Vagina (tissue), 2 donors: ENCODE measurements at regions of chr11 and their contacts with region 1.

Region 1: DNA sequence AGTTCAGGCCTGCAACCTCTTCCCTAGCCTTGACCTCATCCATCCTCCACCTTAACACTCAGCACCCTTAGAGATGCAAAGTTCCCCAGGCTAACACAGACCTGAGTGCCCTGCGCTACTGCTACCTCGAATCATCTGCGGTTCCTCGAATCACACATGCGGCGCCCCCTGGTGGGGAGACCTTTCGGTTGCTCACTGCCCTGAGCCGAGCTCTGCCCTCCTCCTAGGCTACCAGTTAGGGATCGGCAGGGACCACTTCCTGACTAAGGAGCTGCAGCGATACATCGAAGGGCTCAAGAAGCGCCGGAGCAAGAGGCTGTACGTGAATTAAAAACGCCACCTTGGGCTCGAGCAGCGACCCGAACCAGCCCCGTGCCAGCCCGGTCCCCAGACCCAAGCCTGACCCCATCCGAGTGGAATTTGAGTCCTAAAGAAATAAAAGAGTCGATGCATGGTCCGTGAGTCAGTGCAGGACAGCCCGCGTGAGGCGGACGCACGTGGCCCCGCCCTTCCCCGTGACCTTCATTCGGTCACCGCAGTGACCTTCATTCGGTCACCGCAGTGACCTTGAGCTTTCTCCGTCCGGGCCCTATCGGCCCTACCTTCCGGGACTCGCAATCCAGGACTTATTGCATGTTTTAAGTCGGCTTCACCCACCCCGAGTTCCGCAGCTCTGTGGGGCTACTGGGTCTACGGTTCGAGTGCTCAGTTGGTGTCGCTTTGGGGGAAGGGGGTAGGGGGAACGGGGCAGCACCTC is 830 bp upstream of the ESRRA start:
- DNase-seq: peak in 1 of 2 donors; percentile 93
- H3K4me3 ChIP-seq: peak overlapping the region; percentile 83 to 93
- H3K27ac ChIP-seq: peak overlapping the region; percentile 96
- H3K4me1 ChIP-seq: peaks cover 45% of the 10 kb centered on the region
- H3K27me3 ChIP-seq: no peaks in the 10 kb centered on the region
- CTCF ChIP-seq: peak; percentile 83 to 90 (median 85)
- POLR2A ChIP-seq: no peak

Region 2: DNA sequence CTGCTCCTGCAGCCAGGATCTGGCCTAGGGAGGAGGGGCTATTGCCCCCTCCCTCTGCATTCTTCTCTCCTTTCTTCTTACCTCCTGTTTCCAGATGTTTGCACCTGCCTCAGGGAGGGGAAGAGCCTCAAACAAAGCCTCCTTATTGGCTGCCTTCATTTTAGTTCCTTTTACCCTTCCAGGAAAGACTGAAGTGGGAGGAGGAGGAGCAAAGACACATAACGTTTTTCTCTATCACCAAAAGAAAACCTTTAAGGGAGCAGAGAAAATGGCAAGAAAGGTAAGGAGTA is 1370.1 kb before region 1 on chr11:
- intact Hi-C with region 1: no loop called
- DNase-seq: no peak
- H3K4me3 ChIP-seq: no peak overlapping the region
- H3K27ac ChIP-seq: no peak overlapping the region
- H3K4me1 ChIP-seq: no peaks in the 10 kb centered on the region
- H3K27me3 ChIP-seq: no peaks in the 10 kb centered on the region
- CTCF ChIP-seq: no peak
- POLR2A ChIP-seq: no peak

Region 3: GRCh38 chr11:64234835-64235379 is 69.6 kb before region 1 on chr11:
- intact Hi-C with region 1: loop called (anchors 5 kb)
- DNase-seq: no peak
- H3K4me3 ChIP-seq: peak overlapping the region; percentile 62 to 94
- H3K27ac ChIP-seq: peak overlapping the region; percentile 94
- H3K4me1 ChIP-seq: peaks cover 61% of the 10 kb centered on the region
- H3K27me3 ChIP-seq: no peaks in the 10 kb centered on the region
- CTCF ChIP-seq: no peak
- POLR2A ChIP-seq: peak in 1 of 2 donors; percentile 20